ENCODE measurements at regions of chr10 and their contacts with region 1.

Region 1: DNA sequence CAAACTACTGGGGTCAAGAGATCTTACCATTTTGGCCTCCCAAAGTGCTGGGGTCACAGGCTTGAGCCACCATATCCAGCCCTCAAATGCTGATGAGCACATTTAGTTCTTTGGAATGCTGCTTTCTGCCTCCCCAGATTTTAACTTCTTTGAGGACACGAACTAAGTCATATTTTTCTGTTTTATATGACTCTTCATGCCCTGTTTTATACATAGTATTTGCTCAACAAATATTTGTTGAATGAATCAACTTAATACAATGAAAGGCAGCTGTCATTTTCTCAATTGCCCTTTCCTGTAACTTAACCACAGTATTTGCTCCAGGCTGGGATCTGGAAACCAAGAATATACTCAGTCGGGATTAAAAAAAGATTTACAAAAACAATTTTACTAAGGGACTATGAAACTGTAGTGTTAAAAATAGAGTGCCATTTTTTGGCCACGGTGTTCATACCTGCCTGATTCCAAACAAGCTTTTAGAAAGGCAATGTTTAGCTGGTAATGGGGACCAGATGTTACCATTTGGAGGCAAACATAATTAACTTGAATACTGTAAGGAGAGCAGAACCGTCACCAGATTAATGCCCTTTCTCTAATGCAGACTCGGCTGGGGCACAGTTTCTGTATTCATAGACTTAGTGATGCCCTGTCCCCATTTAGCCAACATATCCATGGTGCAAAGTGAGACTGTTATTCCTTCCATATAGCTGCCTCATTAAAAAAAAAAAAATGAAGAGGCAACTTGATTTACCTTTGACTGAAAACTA is 117.6 kb downstream of the NRP1 start:
- DNase-seq: peak; percentile 100
- ATAC-seq: peak; percentile 91
- H3K4me3 ChIP-seq: peak overlapping the region; percentile 6; the same call in 1 of the 2 replicates
- H3K27ac ChIP-seq: peak overlapping the region; percentile 65
- H3K4me1 ChIP-seq: peaks cover 46% of the 10 kb centered on the region
- H3K27me3 ChIP-seq: no peaks in the 10 kb centered on the region
- CTCF ChIP-seq: no peak

Region 2: DNA sequence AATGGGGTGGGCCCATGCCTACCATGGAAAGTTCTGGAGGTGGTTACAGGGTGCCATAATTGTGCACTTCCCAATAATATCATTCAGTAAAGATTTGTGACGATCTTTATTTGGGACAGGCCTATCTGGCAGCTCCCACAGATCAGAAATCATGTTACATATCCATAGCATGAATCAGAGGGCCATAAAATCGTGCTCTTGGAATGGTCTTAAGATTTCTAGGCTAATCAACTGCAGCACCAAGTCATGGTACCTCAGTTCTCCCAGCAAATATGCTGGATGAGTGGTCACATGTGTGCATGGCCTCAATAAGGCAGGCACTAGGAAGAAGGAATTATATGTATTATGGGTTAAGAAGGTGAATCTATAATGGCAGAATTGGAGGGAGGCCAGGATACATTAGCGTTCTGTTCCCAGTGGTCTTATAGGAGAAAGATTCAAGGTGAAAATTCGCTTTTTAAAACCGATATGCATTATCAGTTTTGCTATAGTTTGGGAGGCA is 17.1 kb before region 1 on chr10:
- CTCF ChIA-PET with region 1: no interaction called
- POLR2A ChIA-PET with region 1: no interaction called
- intact Hi-C with region 1: loop called (anchors 1 kb)
- DNase-seq: peak; percentile 98
- ATAC-seq: peak; percentile 57
- H3K4me3 ChIP-seq: no peak overlapping the region
- H3K27ac ChIP-seq: peak overlapping the region; percentile 26
- H3K4me1 ChIP-seq: peaks cover 57% of the 10 kb centered on the region
- H3K27me3 ChIP-seq: no peaks in the 10 kb centered on the region
- CTCF ChIP-seq: no peak

Region 3: DNA sequence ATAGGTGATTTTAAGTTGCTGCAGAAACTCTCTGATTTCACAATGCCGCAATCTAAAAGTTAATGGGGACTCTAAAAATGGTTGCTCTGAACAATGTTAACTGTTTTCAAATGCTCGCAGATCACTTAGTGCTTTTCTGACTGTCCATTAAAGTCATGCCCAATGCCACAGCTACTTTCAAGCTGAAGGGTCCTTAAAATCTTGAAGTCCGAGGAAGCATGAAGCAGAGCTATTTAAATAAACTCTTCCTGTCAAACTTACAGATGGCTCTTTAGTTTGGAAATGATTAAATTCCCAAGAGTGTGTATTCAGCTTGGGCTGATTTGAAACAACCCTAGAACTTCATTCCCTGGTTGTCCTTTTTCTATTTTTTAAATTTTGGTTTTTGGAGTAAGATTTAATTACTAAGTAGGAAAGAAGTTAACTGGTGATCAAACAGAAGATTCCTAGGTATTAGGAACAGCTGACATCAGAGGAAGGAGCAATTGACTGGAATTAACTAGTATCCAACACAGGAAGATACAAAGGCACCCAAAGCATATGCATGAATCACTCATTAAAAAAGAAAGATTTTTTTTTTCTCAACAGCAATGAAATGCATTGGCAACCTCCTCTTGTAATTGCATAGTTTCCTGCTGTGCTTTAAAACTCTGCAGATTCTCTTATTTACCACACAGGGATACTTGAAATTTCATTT is 12.6 kb after region 1 on chr10:
- CTCF ChIA-PET with region 1: no interaction called
- POLR2A ChIA-PET with region 1: interaction called, 14 read pairs
- intact Hi-C with region 1: loop called (anchors 1 kb)
- DNase-seq: peak; percentile 77
- ATAC-seq: peak; percentile 79
- H3K4me3 ChIP-seq: no peak overlapping the region
- H3K27ac ChIP-seq: peak overlapping the region; percentile 31
- H3K4me1 ChIP-seq: peaks cover 18% of the 10 kb centered on the region
- H3K27me3 ChIP-seq: no peaks in the 10 kb centered on the region
- CTCF ChIP-seq: no peak

Measured in PC-3 (cell line).